ENCODE measurements at regions of chr12 and their contacts with region 1.

Region 1: DNA sequence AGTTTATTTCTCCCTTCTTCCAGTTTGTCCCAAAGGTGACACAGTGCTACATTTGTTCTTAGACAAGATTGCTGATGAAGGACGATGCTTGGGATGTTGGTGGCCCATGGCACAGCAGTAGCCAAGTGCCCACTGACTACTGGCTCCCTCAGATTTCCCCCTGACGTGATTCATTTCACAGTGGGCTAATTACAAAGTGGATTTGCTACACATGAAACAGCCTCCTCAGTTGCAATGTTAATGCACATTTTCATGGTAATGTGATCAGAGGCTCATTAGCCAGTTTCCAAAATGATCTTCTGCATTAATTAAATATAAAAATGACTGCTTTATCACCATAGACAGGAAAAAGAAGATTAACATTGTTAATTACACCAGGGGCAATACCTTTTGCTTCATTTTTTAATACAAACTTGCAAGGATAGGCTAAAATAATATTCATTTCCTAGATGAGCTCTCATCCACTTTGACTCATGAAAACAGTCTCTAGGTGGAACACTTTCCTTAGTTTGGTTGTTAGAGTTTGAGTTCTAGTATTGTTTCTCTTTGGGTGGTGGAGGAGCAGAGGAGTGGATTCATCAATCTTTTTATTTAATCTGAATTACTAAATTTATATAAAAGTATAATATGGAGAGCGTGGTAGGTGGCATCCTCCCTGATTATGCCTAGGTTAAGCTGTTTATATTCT is 250.9 kb downstream of the PDZRN4 start:
- DNase-seq: no peak
- H3K4me3 ChIP-seq: no peak overlapping the region
- H3K27ac ChIP-seq: no peak overlapping the region
- H3K4me1 ChIP-seq: peaks cover 8% of the 10 kb centered on the region
- H3K27me3 ChIP-seq: no peaks in the 10 kb centered on the region
- CTCF ChIP-seq: no peak; the same call in 1 of the 2 replicates

Region 2: DNA sequence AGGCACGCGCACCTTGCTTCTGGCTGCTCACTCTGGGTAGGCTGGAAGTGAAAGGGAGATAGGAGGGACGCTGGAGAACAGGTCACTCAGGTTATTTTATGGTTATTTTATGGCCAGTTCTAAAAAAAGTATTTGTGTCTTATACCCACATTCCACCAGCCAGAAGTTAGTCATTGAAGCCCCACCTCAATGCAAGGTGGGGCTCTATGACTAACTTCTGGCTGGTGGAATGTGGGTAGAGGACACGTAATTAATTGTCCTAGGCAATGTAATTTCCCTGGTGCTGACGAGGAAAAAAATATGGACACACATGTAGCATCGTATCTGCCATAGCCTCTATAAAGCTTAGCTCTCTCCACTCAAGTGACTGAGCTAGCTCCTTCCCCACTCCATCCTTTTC is 146.0 kb before region 1 on chr12:
- CTCF ChIA-PET with region 1: no interaction called
- POLR2A ChIA-PET with region 1: no interaction called
- intact Hi-C with region 1: no loop called
- DNase-seq: no peak
- H3K4me3 ChIP-seq: no peak overlapping the region
- H3K27ac ChIP-seq: no peak overlapping the region
- H3K4me1 ChIP-seq: peaks cover under 1% of the 10 kb centered on the region
- H3K27me3 ChIP-seq: no peaks in the 10 kb centered on the region
- CTCF ChIP-seq: no peak

Region 3: GRCh38 chr12:41452838-41453407 is 13.9 kb after region 1 on chr12:
- CTCF ChIA-PET with region 1: no interaction called
- POLR2A ChIA-PET with region 1: no interaction called
- intact Hi-C with region 1: loop called (anchors 2 kb)
- DNase-seq: no peak
- H3K4me3 ChIP-seq: no peak overlapping the region
- H3K27ac ChIP-seq: no peak overlapping the region
- H3K4me1 ChIP-seq: peaks cover 9% of the 10 kb centered on the region
- H3K27me3 ChIP-seq: no peaks in the 10 kb centered on the region
- CTCF ChIP-seq: no peak

Region 4: DNA sequence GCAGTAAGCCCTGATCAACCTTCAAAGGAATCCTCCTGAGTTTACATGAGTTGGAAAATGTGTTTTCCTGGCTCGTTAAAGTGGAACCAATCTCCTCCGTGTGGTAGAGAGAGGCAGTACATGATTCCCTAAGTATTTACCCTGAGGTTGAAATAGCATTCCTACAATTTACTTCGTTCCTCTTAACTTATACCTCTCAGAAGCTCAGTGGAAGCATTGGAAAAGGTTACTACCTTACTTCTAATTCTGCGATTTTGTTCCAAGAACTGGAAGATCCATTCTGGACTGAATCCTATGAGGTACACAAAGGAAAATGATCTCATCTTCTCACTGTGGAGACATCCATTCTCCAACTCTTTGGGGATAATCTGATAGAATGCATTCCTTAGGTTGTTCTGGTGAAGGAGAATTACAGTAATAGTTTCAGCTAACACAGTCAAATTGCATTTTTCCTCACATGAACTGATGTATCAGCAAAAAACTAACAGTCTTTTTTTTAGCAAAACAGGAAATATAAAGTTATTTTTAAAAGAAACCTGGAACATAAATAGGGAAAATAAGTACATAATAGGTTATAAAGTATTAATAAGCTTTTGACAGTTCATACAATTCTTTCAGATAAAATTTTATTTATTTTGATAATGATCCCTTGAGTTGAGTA is 224.7 kb after region 1 on chr12:
- CTCF ChIA-PET with region 1: interaction called, 3 read pairs
- POLR2A ChIA-PET with region 1: no interaction called
- intact Hi-C with region 1: loop called (anchors 5 kb)
- DNase-seq: peak; percentile 73
- H3K4me3 ChIP-seq: no peak overlapping the region
- H3K27ac ChIP-seq: no peak overlapping the region
- H3K4me1 ChIP-seq: peaks cover 11% of the 10 kb centered on the region
- H3K27me3 ChIP-seq: no peaks in the 10 kb centered on the region
- CTCF ChIP-seq: peak; percentile 77